ENCODE measurements at regions of chr1 and their contacts with region 1.

Region 1: DNA sequence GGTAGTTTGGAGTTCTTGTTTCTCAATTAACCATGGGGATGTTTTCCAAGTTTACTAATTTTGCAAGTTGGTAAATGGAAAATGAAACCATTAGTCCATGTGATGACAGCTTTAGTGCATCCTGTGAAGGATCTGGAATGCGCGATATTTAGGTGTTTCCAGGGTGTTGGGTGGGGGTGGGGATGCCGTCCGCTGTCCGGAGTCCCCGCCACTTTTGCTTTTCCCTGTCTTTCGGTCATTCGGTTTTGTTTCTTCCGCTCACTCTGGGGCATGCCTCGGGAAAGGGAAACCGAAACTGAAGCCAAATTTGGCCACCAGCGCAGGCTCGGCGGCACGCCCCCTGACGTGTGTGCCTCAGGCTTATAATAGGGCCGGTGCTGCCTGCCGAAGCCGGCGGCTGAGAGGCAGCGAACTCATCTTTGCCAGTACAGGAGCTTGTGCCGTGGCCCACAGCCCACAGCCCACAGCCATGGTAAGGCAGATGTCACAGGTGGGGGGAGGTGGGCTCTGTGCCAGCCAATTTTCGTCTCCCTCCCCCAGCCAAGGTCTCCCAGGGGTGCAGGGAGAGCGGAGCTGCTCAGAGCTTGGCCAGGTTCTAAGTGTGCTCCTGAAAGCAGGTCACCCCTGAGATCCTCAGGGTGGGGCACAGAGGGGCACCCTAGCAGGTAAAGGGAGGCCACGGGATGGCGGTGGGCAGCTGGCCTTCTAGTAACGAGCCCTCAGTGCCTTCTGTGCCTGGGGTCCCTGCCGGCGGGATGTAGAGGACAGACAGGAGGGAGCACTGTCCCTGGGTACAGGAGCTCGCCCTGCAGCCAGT is at the start of gene ISG15:
- DNase-seq: peak; percentile 91
- ATAC-seq: peak; percentile 90
- H3K4me3 Mint-ChIP-seq: peak within 1 kb of the TSS; percentile 87
- H3K27ac Mint-ChIP-seq: peak within 1 kb of the TSS; percentile 95
- H3K4me1 Mint-ChIP-seq: peaks cover 24% of the 10 kb centered on the region
- H3K27me3 Mint-ChIP-seq: no peaks in the 10 kb centered on the region
- total RNA-seq, gene ISG15: 425 to 457 TPM

Region 2: DNA sequence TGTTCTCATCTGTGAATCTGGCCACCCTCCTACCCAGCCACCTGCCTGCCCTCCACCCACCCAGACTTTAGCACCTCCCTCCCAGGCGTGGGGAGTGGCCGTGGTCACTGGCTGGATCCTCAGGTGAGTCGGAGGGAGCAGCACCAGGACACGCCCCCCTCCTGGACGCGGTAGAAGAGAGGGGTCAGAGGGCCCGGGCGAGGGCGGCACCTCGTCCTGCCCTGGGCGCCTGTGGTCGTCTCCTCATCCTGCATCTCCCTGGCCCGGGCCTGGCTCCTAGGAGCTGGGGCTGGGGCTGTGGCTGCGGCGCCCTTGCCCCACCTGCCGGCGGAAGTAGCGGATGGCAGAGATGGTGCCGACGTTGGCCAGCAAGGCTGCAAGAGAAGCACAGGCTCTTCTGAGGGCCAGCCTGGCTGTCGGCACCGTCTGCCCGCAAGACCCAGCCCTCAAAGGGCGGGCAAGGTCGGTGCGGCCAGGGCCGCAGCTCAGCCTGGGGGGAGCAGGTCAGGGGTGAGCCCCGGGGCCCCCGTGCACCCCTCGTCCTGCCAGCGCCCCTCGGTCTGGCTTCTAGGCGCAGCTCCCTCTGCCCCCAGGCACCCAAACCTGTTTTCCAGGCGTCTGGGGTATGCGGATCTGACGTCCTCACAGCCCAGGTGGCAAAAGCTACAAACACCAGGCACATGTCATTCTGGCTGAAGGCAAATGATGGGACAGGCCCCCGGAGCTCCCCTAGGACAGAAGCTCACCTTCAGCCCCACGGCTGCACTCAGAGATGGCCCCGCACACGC is 37.2 kb before region 1 on chr1:
- POLR2A ChIA-PET with region 1: no interaction called
- DNase-seq: peak; percentile 67
- ATAC-seq: peak; percentile 67
- H3K4me3 Mint-ChIP-seq: no peak overlapping the region
- H3K27ac Mint-ChIP-seq: no peak overlapping the region
- H3K4me1 Mint-ChIP-seq: no peaks in the 10 kb centered on the region
- H3K27me3 Mint-ChIP-seq: peaks cover 5% of the 10 kb centered on the region

Region 3: GRCh38 chr1:1001461-1002204 is 11.7 kb before region 1 on chr1:
- POLR2A ChIA-PET with region 1: interaction called, 28 read pairs
- DNase-seq: peak; percentile 88
- ATAC-seq: peak; percentile 35
- H3K4me3 Mint-ChIP-seq: peak overlapping the region; percentile 73
- H3K27ac Mint-ChIP-seq: no peak overlapping the region
- H3K4me1 Mint-ChIP-seq: peaks cover 15% of the 10 kb centered on the region
- H3K27me3 Mint-ChIP-seq: peaks cover 18% of the 10 kb centered on the region

Region 4: GRCh38 chr1:1040004-1040991 is 27.0 kb after region 1 on chr1:
- POLR2A ChIA-PET with region 1: interaction called, 28 read pairs
- DNase-seq: peak; percentile 88
- ATAC-seq: peak; percentile 91
- H3K4me3 Mint-ChIP-seq: peak overlapping the region; percentile 89
- H3K27ac Mint-ChIP-seq: peak overlapping the region; percentile 80
- H3K4me1 Mint-ChIP-seq: peaks cover 15% of the 10 kb centered on the region
- H3K27me3 Mint-ChIP-seq: no peaks in the 10 kb centered on the region

Region 5: GRCh38 chr1:1081311-1082238 is 68.3 kb after region 1 on chr1:
- POLR2A ChIA-PET with region 1: no interaction called
- DNase-seq: no peak
- ATAC-seq: no peak
- H3K4me3 Mint-ChIP-seq: no peak overlapping the region
- H3K27ac Mint-ChIP-seq: no peak overlapping the region
- H3K4me1 Mint-ChIP-seq: peaks cover 3% of the 10 kb centered on the region
- H3K27me3 Mint-ChIP-seq: no peaks in the 10 kb centered on the region

Region 6: GRCh38 chr1:1122981-1123480 is 109.7 kb after region 1 on chr1:
- POLR2A ChIA-PET with region 1: no interaction called
- DNase-seq: no peak
- ATAC-seq: no peak
- H3K4me3 Mint-ChIP-seq: no peak overlapping the region
- H3K27ac Mint-ChIP-seq: no peak overlapping the region
- H3K4me1 Mint-ChIP-seq: peaks cover 5% of the 10 kb centered on the region
- H3K27me3 Mint-ChIP-seq: no peaks in the 10 kb centered on the region

Measured in activated naive CD8-positive, alpha-beta T cell treated with anti-CD3 and anti-CD28 coated beads, Interleukin-2, amount 10 ng/mL, durations not matched to agents 7 days and 5 days (primary cell).